ENCODE measurements at regions of chr3 and their contacts with region 1.

Region 1: GRCh38 chr3:160225176-160226025 is at the start of gene C3orf80:
- DNase-seq: peak; percentile 85
- H3K4me3 Mint-ChIP-seq: peak within 1 kb of the TSS; percentile 84
- H3K27ac Mint-ChIP-seq: peak within 1 kb of the TSS; percentile 20
- H3K4me1 Mint-ChIP-seq: peaks cover 16% of the 10 kb centered on the region
- H3K27me3 Mint-ChIP-seq: peaks cover 61% of the 10 kb centered on the region
- total RNA-seq, gene C3orf80: 0.07 TPM in 1 of 2 replicates, not detected in the other

Region 2: GRCh38 chr3:158649791-158650190 is 1575.6 kb before region 1 on chr3:
- intact Hi-C with region 1: loop called (anchors 5 kb)
- DNase-seq: peak; percentile 35
- H3K4me3 Mint-ChIP-seq: no peak overlapping the region
- H3K27ac Mint-ChIP-seq: no peak overlapping the region
- H3K4me1 Mint-ChIP-seq: peaks cover 20% of the 10 kb centered on the region
- H3K27me3 Mint-ChIP-seq: no peaks in the 10 kb centered on the region

Region 3: GRCh38 chr3:159763602-159764489 is 461.6 kb before region 1 on chr3:
- intact Hi-C with region 1: loop called (anchors 10 kb)
- DNase-seq: peak; percentile 85
- H3K4me3 Mint-ChIP-seq: peak overlapping the region; percentile 93
- H3K27ac Mint-ChIP-seq: peak overlapping the region; percentile 72
- H3K4me1 Mint-ChIP-seq: peaks cover 18% of the 10 kb centered on the region
- H3K27me3 Mint-ChIP-seq: peaks cover 61% of the 10 kb centered on the region

Region 4: GRCh38 chr3:160544844-160545503 is 319.6 kb after region 1 on chr3:
- intact Hi-C with region 1: no loop called
- DNase-seq: no peak
- H3K4me3 Mint-ChIP-seq: no peak overlapping the region
- H3K27ac Mint-ChIP-seq: no peak overlapping the region
- H3K4me1 Mint-ChIP-seq: peaks cover 26% of the 10 kb centered on the region
- H3K27me3 Mint-ChIP-seq: no peaks in the 10 kb centered on the region